ENCODE measurements at regions of chr19 and their contacts with region 1.

Region 1: GRCh38 chr19:35066691-35067563 is 25.4 kb downstream of the HPN start:
- DNase-seq: peak; percentile 79 to 88
- ATAC-seq: peak; percentile 80 to 92 (median 88)
- H3K4me3 ChIP-seq: no peak overlapping the region
- H3K27ac ChIP-seq: no peak overlapping the region
- H3K4me1 ChIP-seq: peaks cover 0 to 7% (median 0%) of the 10 kb centered on the region in 9 donors
- H3K27me3 ChIP-seq: peaks cover 0 to 9% (median 0%) of the 10 kb centered on the region in 7 donors
- CTCF ChIP-seq: peak; percentile 71 to 90 (median 84)

Region 2: GRCh38 chr19:34999498-35000341 is 67.2 kb before region 1 on chr19 and contains the start of gene GRAMD1A:
- intact Hi-C with region 1: no loop called
- DNase-seq: peak; percentile 90 to 92
- ATAC-seq: peak; percentile 91 to 96 (median 94)
- H3K4me3 ChIP-seq: peak within 1 kb of the TSS; percentile 72 to 99 (median 94)
- H3K27ac ChIP-seq: peak within 1 kb of the TSS; percentile 86 to 100 (median 98)
- H3K4me1 ChIP-seq: peaks cover 6 to 92% (median 80%) of the 10 kb centered on the region in 9 donors
- H3K27me3 ChIP-seq: no peaks in the 10 kb centered on the region
- CTCF ChIP-seq: no peak
- total RNA-seq, gene GRAMD1A: 19.5 to 49.4 (median 30.3) TPM

Region 3: DNA sequence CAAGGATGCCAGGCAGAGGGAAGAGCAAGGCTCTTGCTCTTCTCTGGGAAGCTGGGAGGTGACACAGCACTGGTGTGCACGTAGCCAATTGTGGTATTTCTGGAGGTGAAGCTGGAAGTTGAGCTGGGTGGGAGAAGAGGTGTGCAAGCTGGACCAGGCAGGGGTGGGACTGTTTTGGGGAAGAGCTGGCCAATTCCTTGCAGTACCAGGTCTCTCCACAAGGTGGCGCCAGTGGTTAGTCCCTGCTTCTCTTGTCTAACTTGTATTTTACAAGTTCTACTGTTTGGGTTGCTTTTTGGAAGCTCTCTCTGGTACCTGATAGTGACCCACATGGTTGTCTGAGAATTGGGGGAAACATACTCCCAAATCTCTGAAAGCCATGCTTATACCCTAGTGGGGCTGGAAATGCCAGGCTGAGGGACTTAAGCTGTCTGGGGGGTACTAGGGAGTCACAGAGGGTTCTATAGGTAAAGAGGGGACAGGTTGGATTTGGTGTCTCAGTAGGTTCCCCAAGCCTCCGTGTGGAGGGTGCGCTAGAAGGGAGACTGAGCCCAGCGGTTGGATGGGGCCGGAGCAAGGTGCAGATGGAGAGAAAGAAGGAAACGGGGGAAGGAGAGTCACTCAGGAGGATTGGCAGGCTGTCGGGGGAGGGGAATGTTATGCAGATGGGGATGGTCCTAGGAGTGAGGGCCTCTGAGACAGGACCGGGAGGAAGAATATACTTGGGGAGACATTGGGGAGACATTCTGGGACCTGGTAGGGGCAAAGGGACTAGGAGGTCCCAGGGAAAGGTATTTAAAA is 22.4 kb before region 1 on chr19:
- intact Hi-C with region 1: no loop called
- DNase-seq: peak; percentile 55 to 67
- ATAC-seq: no peak
- H3K4me3 ChIP-seq: no peak overlapping the region
- H3K27ac ChIP-seq: no peak overlapping the region
- H3K4me1 ChIP-seq: peaks cover 10 to 54% (median 32%) of the 10 kb centered on the region in 9 donors
- H3K27me3 ChIP-seq: peaks cover 0 to 7% (median 0%) of the 10 kb centered on the region in 7 donors
- CTCF ChIP-seq: peak; percentile 90 to 99 (median 97)

Region 4: DNA sequence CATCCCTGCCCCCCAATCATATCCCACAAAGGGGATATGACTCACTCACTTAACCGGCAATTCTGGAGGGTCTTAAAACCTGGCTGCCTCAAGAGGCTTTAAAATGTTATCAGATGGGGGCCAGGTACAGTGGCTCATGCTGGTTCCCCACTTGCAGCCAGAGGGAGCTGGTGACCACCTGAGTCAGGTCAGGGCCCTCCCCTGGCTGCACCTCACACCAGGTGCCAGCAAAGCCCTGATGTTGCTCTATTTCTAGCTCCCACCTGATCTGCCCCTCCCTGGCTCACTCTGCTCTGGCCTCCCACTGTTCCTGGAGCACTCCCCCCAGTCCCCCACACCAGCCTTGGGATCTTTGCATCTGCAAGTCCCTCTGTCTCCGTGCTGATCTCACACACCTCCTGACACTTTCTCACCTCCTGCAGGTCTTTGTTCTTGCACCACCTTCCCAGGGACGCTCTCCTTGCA is 11.2 kb before region 1 on chr19:
- intact Hi-C with region 1: no loop called
- DNase-seq: no peak
- ATAC-seq: peak in 1 of 8 donors; percentile 24
- H3K4me3 ChIP-seq: no peak overlapping the region
- H3K27ac ChIP-seq: no peak overlapping the region
- H3K4me1 ChIP-seq: peaks cover 0 to 9% (median 0%) of the 10 kb centered on the region in 9 donors
- H3K27me3 ChIP-seq: peaks cover 0 to 7% (median 0%) of the 10 kb centered on the region in 7 donors
- CTCF ChIP-seq: no peak

Region 5: GRCh38 chr19:35135389-35135909 is 68.5 kb after region 1 on chr19:
- intact Hi-C with region 1: loop called in 7 of 10 experiments (anchors 2 to 10 kb)
- DNase-seq: peak; percentile 80 to 85
- ATAC-seq: peak; percentile 48 to 65 (median 55)
- H3K4me3 ChIP-seq: peak overlapping the region in 9 of 10 donors; percentile 12 to 48 (median 33)
- H3K27ac ChIP-seq: peak overlapping the region; percentile 17 to 80 (median 68)
- H3K4me1 ChIP-seq: peaks cover 6 to 48% (median 29%) of the 10 kb centered on the region in 9 donors
- H3K27me3 ChIP-seq: peaks cover 0 to 7% (median 0%) of the 10 kb centered on the region in 7 donors
- CTCF ChIP-seq: peak; percentile 77 to 99 (median 94)

Region 6: GRCh38 chr19:35140962-35141637 is 74.2 kb after region 1 on chr19:
- intact Hi-C with region 1: loop called in 5 of 10 experiments (anchors 2 to 10 kb)
- DNase-seq: peak; percentile 89 to 97
- ATAC-seq: peak; percentile 46 to 80 (median 64)
- H3K4me3 ChIP-seq: peak overlapping the region in 9 of 10 donors; percentile 26 to 63 (median 56)
- H3K27ac ChIP-seq: peak overlapping the region in 8 of 10 donors; percentile 87 to 99 (median 94)
- H3K4me1 ChIP-seq: peaks cover 3 to 71% (median 48%) of the 10 kb centered on the region in 9 donors
- H3K27me3 ChIP-seq: peaks cover 0 to 35% (median 4%) of the 10 kb centered on the region in 7 donors
- CTCF ChIP-seq: peak in 7 of 9 donors; percentile 29 to 59 (median 46)